Breast epithelium (tissue), 4 donors: ENCODE measurements at regions of chr2 and their contacts with region 1.

Region 1: DNA sequence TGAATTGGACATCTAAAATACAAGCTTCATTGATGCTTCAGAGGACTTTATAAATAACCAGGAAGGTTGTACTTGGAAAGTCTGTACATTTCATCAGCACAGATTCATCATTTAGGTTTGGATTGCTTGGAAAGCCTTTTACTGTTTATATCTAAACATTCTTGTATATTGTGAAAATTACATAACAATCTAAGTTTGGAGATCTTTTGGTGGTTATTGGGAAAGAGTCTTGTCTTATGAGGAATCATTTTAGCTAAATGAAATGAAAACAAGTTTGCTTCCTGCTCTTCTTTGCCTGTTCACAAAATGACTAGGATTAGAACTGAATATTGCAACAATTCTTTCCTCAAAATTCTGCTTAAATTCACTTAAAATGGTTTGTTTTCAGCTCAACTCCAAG is 79.3 kb downstream of the ABI2 start:
- DNase-seq: no peak
- H3K4me3 ChIP-seq: no peak overlapping the region
- H3K27ac ChIP-seq: no peak overlapping the region
- H3K4me1 ChIP-seq: peaks cover 0 to 6% of the 10 kb centered on the region in 2 donors
- H3K27me3 ChIP-seq: no peaks in the 10 kb centered on the region
- CTCF ChIP-seq: no peak
- POLR2A ChIP-seq: no peak

Region 2: DNA sequence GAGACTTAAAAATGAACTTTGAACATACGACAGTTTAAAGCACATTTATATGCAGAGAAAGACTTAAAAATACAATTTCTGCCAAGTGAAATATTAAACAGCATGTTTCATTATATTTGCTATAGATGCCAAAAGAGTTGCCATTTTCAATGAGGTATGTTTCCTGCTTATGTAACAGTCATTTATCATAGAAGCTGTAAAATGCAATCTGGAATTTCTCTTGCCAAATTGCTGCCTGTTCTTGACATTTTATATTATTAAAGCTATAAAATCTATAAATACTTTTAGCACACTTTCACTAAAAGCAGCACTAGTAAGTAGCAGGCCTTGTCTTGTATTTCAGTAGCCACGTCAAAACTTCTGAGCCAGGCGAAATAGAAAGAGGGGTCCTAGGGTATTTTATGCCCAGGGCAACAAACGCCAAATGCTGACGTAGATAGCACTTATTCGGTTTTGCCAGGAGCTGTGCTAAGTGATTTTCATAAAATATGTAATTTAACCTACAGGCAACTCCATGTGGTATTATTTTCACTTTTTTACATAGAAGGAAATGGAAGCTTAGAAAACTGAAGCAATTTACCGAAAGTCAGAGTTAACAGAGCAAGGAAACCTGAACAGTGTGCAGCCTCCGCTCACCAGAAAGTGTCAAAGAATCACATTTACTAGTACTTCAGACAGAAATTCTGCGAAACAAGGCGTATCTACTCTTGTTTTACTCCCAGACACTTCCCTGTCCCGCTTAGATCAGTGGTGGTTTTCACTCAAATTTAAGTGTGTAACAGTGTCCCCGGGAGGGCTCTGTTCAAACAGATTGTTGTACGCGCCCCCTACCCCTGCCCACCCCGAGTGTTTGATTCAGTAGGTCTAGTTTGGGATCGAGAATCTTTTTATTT is 169.9 kb before region 1 on chr2:
- intact Hi-C with region 1: no loop called
- DNase-seq: no peak
- H3K4me3 ChIP-seq: peak overlapping the region in 2 of 3 donors; percentile 68 to 80
- H3K27ac ChIP-seq: peak overlapping the region in 1 of 2 donors; percentile 95
- H3K4me1 ChIP-seq: peaks cover 0 to 7% of the 10 kb centered on the region in 2 donors
- H3K27me3 ChIP-seq: no peaks in the 10 kb centered on the region
- CTCF ChIP-seq: no peak
- POLR2A ChIP-seq: no peak

Region 3: GRCh38 chr2:203442463-203442862 is 35.0 kb after region 1 on chr2:
- intact Hi-C with region 1: loop called (anchors 2 kb)
- DNase-seq: no peak
- H3K4me3 ChIP-seq: no peak overlapping the region
- H3K27ac ChIP-seq: peak overlapping the region in 1 of 2 donors; percentile 7
- H3K4me1 ChIP-seq: no peaks in the 10 kb centered on the region
- H3K27me3 ChIP-seq: no peaks in the 10 kb centered on the region
- CTCF ChIP-seq: no peak
- POLR2A ChIP-seq: no peak

Region 4: DNA sequence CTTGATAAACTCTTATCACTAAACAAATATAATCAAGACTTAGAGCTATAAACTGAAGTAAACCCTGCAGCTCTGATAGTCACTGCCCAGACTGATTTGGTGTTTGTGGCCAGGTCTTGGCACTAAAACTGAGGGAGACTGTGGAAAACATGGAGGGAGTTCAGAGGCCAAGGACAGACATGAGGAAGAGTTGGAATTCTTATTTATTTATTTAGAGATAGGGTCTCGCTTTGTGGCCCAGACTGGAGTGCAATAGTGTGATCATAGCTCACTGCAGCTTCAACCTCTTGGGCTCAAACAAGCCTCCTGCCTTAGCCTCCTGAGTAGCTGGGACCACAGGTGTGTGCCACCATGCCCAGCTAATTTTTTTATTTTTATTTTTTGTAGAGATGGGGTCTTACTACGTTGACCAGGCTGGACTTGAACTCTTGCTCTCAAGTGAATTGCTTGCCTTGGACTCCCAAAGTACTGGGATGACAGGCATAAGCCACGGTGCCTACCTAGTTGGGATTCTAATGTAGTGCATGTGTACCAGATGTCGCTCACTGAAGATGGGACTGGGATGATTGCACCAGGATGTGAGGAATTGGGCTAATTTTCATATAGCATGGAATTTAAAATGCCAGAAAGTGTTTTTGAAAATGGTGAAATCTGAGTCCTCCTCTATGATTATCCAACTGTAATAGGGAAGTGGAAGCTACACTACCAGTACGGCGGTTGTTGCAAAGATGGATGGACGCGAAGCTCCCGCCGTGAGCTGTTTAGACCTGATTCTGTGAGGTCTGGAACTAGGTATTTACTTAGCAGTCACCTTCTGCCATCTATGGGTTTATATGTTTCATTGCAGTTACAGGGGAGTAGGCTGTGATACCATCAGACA is 407.4 kb after region 1 on chr2:
- intact Hi-C with region 1: no loop called
- DNase-seq: peak in 1 of 2 donors; percentile 35
- H3K4me3 ChIP-seq: peak overlapping the region in 1 of 3 donors; percentile 39
- H3K27ac ChIP-seq: no peak overlapping the region
- H3K4me1 ChIP-seq: no peaks in the 10 kb centered on the region
- H3K27me3 ChIP-seq: no peaks in the 10 kb centered on the region
- CTCF ChIP-seq: peak; percentile 57 to 86 (median 84)
- POLR2A ChIP-seq: no peak

Region 5: DNA sequence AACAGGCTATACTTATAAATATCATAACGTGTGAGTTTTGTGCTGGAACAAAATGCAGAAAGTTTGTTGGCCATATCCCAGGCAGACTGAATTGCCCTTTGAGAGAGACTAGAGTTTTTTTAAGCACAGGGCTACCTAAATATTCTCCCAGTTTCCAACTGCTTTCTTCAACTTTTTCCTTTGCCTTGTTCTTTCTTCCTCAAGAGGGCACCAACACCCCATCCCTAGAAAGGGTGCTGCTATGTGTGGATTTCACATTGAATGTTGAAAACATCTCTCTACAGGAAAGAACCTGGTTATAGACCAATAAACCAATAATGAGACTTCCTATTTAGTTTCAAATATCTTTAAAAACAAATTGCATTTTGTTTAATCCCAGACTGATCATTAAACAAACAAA is 617.0 kb after region 1 on chr2:
- intact Hi-C with region 1: no loop called
- DNase-seq: no peak
- H3K4me3 ChIP-seq: no peak overlapping the region
- H3K27ac ChIP-seq: no peak overlapping the region
- H3K4me1 ChIP-seq: no peaks in the 10 kb centered on the region
- H3K27me3 ChIP-seq: no peaks in the 10 kb centered on the region
- CTCF ChIP-seq: peak in 2 of 3 donors; percentile 49 to 61
- POLR2A ChIP-seq: no peak